ENCODE measurements at regions of chr10 and their contacts with region 1.

Region 1: GRCh38 chr10:50367732-50368131 is 116.4 kb upstream of the ASAH2 start:
- DNase-seq: no peak
- ATAC-seq: no peak
- H3K4me3 Mint-ChIP-seq: no peak overlapping the region
- H3K27ac Mint-ChIP-seq: no peak overlapping the region
- H3K4me1 Mint-ChIP-seq: peaks cover 24% of the 10 kb centered on the region
- H3K27me3 Mint-ChIP-seq: no peaks in the 10 kb centered on the region
- CTCF ChIP-seq: no peak

Region 2: GRCh38 chr10:50385624-50386023 is 17.9 kb after region 1 on chr10:
- CTCF ChIA-PET with region 1: interaction called, 5 read pairs
- POLR2A ChIA-PET with region 1: no interaction called
- intact Hi-C with region 1: loop called (anchors 2 kb)
- DNase-seq: no peak
- ATAC-seq: no peak
- H3K4me3 Mint-ChIP-seq: no peak overlapping the region
- H3K27ac Mint-ChIP-seq: no peak overlapping the region
- H3K4me1 Mint-ChIP-seq: peaks cover 51% of the 10 kb centered on the region
- H3K27me3 Mint-ChIP-seq: no peaks in the 10 kb centered on the region
- CTCF ChIP-seq: no peak